ENCODE measurements at regions of chr1 and their contacts with region 1.

Region 1: GRCh38 chr1:204431310-204432165 is 19.9 kb upstream of the PPP1R15B start:
- DNase-seq: peak; percentile 46
- H3K4me3 ChIP-seq: no peak overlapping the region
- CTCF ChIP-seq: peak; percentile 85

Region 2: GRCh38 chr1:204366736-204367135 is 64.8 kb before region 1 on chr1:
- CTCF ChIA-PET with region 1: no interaction called
- POLR2A ChIA-PET with region 1: no interaction called
- DNase-seq: no peak
- H3K4me3 ChIP-seq: no peak overlapping the region
- CTCF ChIP-seq: peak; percentile 64

Region 3: GRCh38 chr1:204411451-204412204 is 19.9 kb before region 1 on chr1 and contains the start of gene PPP1R15B:
- CTCF ChIA-PET with region 1: interaction called, 68 read pairs
- POLR2A ChIA-PET with region 1: interaction called, 3 read pairs
- DNase-seq: peak; percentile 93
- H3K4me3 ChIP-seq: peak within 1 kb of the TSS; percentile 73
- CTCF ChIP-seq: no peak

Region 4: DNA sequence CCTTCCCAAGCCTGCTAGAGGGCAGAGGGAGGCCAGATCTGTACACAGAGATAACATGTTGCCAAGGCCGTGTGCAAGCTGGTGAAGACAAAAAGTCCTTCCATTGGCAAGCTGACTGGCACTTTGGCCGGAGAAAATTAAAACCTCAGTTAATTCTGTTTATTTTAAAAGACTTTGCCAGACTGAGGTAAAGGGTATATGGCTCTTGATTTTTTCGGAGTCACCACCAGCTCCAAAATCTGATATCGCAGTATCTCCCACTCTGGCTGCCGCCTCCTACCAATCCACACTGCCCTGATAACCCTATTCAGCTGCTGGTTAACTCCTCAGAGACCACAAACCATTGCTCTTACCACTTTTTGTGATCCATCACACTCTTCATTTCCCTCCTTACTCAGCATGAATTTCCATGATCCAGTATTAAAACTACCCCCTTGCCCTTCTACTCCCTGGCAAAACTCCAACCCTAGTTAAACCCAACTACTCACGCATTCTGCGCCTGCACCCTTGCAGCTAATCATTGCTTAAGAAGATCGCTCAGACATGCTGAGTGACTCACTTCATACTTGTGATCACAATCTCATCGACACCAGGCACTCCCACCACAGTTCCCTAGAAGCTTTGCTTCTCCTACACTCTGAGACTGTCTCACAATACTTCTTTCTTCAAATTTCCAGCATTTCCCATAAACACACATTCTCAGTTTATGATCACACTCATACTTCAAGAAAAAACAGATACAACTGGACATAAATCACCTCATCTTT is 14.1 kb before region 1 on chr1:
- CTCF ChIA-PET with region 1: interaction called, 68 read pairs
- POLR2A ChIA-PET with region 1: interaction called, 4 read pairs
- DNase-seq: peak; percentile 99
- H3K4me3 ChIP-seq: peak overlapping the region; percentile 23
- CTCF ChIP-seq: no peak

Region 5: DNA sequence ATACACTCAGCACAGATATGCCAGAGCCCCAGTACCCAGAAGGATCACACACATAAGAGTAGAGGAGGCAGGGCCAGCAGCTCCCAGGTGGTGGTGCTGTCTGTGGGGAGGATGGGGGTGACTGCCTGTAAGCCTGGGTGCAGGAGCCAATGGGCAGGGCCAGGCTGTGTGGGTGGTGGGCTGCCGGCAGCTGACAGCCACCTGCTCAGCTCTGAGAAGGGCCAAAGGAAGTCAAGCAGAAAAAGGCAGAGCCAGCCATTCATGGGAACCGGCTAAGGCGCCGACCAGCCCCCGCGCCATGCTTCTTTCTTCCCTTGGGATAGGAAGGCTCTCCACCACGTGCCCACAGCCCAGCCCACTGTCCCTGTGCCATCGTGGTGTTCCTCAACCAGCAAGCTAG is 49.0 kb after region 1 on chr1:
- CTCF ChIA-PET with region 1: interaction called, 25 read pairs
- POLR2A ChIA-PET with region 1: no interaction called
- DNase-seq: no peak
- H3K4me3 ChIP-seq: no peak overlapping the region
- CTCF ChIP-seq: no peak

Region 6: DNA sequence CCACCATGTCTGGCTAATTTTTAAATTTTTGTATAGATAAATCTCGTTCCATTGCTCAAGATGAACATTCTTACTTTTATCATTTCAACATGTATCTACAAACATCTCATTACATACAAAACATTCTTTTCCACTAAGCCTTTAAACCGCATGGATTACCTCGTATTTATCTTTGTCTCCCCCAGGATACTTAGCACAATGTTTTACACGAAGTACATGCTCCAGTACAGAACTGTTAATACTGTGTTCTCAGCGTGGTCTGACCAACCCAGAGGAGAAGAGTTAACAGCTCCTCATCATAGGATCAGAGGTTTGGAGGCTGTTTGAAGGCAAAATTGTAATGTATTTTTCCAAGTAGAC is 55.7 kb after region 1 on chr1:
- CTCF ChIA-PET with region 1: interaction called, 1,052 read pairs
- POLR2A ChIA-PET with region 1: no interaction called
- DNase-seq: no peak
- H3K4me3 ChIP-seq: no peak overlapping the region
- CTCF ChIP-seq: no peak